Endothelial cell of umbilical vein (primary cell): ENCODE measurements at regions of chr11 and their contacts with region 1.

Region 1: GRCh38 chr11:102614485-102614884 is 10.6 kb downstream of the MMP20 start:
- DNase-seq: no peak
- H3K4me3 ChIP-seq: no peak overlapping the region
- H3K27ac ChIP-seq: no peak overlapping the region
- H3K4me1 ChIP-seq: peaks cover 11% of the 10 kb centered on the region
- H3K27me3 ChIP-seq: no peaks in the 10 kb centered on the region
- CTCF ChIP-seq: no peak
- POLR2A ChIP-seq: no peak

Region 2: DNA sequence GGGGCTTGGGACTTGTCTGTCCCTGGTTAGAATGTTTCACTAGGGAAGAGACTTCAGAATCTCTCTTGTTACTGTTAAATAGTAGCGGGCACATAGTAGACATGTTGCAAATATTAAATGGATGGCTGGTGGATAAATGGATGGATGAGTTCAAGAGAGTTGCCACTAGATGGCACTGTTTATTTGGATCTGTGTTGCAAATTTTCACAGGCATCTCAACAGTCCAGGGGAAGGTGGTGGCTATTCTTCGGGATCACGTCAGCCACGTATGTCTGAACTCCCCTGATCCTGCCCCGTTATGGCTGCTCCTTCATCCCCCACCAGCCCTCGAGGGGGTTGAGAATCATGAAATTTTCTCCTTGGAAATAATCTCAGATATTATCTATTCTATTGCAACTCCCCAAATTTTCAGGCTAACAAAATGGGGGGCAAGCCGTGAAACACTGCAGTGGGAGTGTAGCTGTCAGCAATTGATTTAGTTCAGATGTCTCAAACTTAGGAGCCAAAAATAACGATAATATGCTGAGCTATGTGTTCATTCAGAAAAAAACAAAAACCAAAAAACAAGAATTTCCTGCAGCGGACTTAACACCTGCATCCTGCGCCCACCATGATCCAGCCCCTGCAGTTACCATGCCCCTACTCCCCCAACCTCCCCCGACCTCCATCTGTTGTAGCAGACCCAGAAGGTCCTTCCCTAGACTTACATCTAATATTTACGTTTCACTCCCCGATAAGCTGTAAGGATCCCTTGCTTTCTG is 326.3 kb before region 1 on chr11:
- CTCF ChIA-PET with region 1: interaction called, 38 read pairs
- POLR2A ChIA-PET with region 1: no interaction called
- dilution Hi-C with region 1: no loop called
- intact Hi-C with region 1: loop called (anchors 2 kb)
- DNase-seq: peak; percentile 66
- H3K4me3 ChIP-seq: no peak overlapping the region
- H3K27ac ChIP-seq: no peak overlapping the region
- H3K4me1 ChIP-seq: no peaks in the 10 kb centered on the region
- H3K27me3 ChIP-seq: no peaks in the 10 kb centered on the region
- CTCF ChIP-seq: peak; percentile 55 to 65
- POLR2A ChIP-seq: no peak

Region 3: DNA sequence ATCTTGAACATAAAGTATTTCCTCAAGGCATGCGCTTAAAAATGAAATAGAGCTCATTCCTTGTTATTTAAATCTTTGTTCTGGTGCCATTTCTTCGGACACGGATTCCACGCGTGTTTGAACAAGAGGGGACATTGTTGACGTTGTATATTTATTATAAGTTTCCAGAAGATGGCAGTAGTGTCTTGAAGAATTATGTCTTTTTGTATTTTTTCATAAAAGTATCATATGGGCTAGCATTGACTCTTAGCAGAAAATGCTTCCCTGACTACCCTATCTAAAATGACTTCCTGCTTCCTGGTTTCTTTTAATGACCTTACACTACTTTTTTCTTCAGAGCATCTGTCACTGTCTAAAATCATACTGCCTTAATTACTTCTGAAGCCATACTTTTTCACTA is 247.1 kb before region 1 on chr11:
- CTCF ChIA-PET with region 1: interaction called, 28 read pairs
- POLR2A ChIA-PET with region 1: no interaction called
- dilution Hi-C with region 1: no loop called
- intact Hi-C with region 1: no loop called
- DNase-seq: peak; percentile 66
- H3K4me3 ChIP-seq: no peak overlapping the region
- H3K27ac ChIP-seq: no peak overlapping the region
- H3K4me1 ChIP-seq: peaks cover 9% of the 10 kb centered on the region
- H3K27me3 ChIP-seq: no peaks in the 10 kb centered on the region
- CTCF ChIP-seq: no peak
- POLR2A ChIP-seq: no peak

Region 4: DNA sequence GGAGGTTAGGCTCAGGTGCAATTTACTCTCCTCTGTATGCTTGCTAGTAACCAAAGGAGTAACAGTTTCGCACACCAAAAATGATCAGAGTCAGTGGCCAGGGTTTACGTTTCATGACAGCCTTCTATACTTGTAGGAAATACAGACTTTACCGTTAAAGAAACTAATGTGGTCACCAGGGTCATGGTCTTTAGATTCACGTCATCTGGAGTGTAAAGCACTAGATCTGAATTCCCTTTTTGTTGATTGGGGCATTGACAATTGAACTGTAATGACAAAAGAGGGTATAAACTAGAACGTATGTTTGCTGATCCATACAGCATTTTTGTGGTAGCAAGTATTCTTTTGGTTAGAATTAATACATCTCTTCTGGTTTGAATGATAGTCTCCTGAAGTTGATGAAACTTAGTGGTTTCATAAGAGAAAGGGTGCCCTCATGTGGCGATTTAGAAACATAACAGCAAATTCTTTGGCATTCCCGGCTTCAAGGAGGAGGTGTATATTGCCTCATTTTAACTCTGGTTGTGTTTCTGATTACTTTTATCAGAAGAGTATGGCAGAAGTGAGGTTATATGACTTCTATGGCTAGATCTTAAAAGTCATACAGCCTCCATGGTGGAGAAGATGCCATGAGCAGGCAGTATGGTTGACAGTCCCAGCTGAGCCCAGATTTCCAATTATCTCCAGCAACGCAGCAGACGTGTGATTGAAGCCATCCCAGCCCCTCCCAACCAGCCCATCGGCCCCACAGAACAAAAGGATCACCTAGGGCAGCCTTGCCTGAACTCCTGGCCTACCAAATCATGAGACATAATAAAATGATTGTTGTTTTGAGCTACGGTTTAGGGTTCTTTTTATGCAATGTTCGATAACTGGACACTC is 119.1 kb before region 1 on chr11:
- CTCF ChIA-PET with region 1: interaction called, 24 read pairs
- POLR2A ChIA-PET with region 1: no interaction called
- dilution Hi-C with region 1: no loop called
- intact Hi-C with region 1: loop called (anchors 1 kb)
- DNase-seq: peak; percentile 77
- H3K4me3 ChIP-seq: no peak overlapping the region
- H3K27ac ChIP-seq: no peak overlapping the region
- H3K4me1 ChIP-seq: peaks cover 13% of the 10 kb centered on the region
- H3K27me3 ChIP-seq: no peaks in the 10 kb centered on the region
- CTCF ChIP-seq: peak; percentile 30 to 51
- POLR2A ChIP-seq: no peak

Region 5: DNA sequence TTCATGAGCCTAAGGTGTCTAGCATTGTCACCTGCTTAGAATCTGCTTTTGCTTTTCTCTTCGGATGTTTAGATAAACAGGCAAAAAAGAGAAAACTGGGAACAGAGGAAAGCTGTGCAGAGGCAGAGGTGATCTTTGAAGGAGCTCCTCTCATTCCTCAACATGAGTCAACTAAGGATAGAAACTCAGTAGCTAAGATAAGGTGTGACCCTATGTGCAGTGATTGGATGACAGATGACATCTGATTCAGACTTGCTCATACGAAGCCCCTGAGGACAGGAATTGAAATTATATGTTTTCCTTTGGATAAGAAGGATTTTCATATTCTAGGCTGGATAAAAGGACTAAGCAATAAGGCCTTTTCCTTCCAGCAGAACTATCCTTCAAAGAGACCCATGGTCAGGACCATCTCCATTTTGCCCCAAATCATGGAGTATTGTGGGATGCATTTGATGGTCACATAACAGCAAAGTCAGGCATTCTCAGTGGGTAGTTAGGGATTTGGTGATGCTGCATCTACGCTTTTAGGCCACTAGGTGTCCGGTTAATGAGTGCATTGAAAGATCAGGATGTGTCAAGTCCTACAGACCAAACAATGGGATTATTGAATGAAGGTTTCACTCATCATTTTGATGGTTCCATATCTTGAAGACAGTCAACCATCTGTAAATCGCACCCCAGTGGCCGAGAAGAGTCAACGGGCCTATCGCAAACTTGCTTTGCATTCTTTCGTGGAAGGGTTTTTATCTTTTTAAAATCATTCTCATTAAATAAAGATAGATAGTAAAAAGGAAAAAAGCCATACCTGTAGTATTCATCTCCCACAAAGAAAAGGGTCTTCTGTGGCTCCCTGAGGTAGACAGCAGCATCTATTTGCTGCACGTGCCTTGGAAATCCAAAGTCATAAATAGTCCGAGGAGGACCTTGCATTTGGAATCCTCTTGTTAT is 21.6 kb before region 1 on chr11:
- CTCF ChIA-PET with region 1: interaction called, 24 read pairs
- POLR2A ChIA-PET with region 1: no interaction called
- dilution Hi-C with region 1: no loop called
- intact Hi-C with region 1: loop called (anchors 1 kb)
- DNase-seq: peak; percentile 46
- H3K4me3 ChIP-seq: no peak overlapping the region
- H3K27ac ChIP-seq: no peak overlapping the region
- H3K4me1 ChIP-seq: peaks cover under 1% of the 10 kb centered on the region
- H3K27me3 ChIP-seq: no peaks in the 10 kb centered on the region
- CTCF ChIP-seq: peak; percentile 59 to 63
- POLR2A ChIP-seq: no peak